Activated CD4-positive, alpha-beta memory T cell treated with anti-CD3 and anti-CD28 coated beads, Interleukin-2, amount 10 ng/mL, durations not matched to agents 7 days and 5 days (primary cell): ENCODE measurements at regions of chr2 and their contacts with region 1.

Region 1: DNA sequence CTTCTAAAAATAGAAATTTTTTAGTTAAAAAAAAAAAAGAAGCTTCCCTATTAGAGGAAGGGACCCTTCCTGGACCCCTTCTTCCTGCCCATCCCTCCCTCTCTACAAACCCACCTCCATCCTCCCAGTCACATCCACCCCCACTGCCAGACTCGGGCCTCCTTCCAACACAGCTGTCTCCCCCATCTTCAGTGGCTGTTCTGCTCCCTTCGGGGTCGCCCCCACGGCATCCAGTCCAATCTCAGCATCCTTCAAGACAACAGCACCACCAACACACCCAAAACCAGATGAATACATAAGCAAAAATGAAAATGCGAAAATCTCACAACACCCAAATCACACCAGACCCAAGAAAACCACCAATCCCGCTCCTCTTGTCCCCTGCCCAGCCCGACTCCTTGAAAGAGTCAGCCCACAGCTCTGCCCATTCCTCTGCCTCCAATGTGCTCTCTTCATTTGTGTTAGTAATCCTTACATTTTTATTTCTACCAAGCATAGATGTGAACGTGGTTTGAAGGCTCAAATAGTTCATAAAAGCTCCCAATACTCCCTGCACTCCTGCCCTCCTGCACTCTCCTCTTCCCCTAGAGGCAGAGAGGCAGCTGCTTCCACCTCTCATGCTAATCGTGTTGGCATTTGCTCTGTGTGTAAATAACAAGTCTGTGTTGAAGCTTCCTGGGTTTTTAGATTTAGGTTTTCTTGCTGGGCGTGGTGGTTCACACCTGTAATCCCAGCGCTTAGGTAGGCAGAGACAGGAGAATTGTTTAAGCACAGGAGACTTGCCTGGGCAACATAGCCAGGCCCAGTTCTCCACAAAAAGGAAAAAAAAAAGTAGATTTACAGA is 37.0 kb downstream of the MAL start:
- DNase-seq: no peak
- H3K4me3 Mint-ChIP-seq: no peak overlapping the region
- H3K27ac Mint-ChIP-seq: peak overlapping the region; percentile 78
- H3K4me1 Mint-ChIP-seq: peaks cover 35% of the 10 kb centered on the region
- H3K27me3 Mint-ChIP-seq: no peaks in the 10 kb centered on the region

Region 2: DNA sequence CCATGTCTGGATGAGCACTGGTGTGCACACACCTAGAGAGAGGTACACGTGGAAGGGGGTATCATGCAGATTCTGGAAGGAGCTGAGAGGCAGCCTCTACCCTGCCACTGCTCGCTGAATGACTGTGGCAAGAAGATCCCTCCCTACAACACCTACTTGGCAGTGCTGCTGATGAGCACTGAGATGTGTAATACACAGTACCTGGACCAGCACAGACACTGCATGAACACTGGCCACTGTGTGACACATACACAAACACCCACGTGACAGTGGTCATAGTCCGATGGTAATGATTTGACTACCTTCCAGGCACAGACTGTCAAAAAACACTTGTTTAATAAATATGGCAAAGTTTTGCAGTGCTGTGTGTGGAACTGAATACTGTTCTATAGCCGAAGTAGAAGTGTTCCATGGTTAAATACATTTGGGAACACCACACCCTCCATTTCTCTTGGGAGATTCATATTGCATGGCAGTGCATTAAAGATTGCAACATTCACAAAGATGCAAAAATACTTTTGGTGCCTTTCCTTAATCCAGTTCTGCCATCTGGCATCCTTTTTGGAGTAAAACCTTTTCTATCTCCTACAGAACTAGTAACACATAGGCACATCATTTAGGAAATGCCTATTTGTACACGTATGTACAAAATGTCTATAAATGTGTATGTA is 29.6 kb after region 1 on chr2:
- CTCF ChIA-PET with region 1: no interaction called
- POLR2A ChIA-PET with region 1: no interaction called
- DNase-seq: no peak
- H3K4me3 Mint-ChIP-seq: no peak overlapping the region
- H3K27ac Mint-ChIP-seq: no peak overlapping the region
- H3K4me1 Mint-ChIP-seq: peaks cover 4% of the 10 kb centered on the region
- H3K27me3 Mint-ChIP-seq: no peaks in the 10 kb centered on the region

Region 3: DNA sequence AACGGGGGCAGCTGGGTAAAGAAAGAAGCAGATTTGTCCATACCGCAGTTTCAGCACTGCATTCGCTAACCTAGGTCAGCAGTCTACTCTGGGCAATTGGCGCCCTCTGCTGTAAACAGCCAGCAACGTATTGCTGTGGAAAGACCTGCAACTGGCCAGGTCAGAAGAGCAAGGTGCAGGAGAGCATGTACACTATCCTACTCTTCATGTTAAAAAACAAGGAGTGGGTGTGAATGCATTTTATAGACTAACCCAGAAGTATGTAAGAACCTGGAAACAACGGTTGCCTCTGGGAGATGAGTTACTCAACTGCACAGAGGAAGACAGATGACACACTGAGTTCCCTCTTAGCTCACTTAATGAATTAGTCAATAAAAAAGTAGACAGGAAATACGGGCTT is 53.0 kb after region 1 on chr2:
- CTCF ChIA-PET with region 1: interaction called, 11 read pairs
- POLR2A ChIA-PET with region 1: interaction called, 3 read pairs
- DNase-seq: peak; percentile 81
- H3K4me3 Mint-ChIP-seq: no peak overlapping the region
- H3K27ac Mint-ChIP-seq: peak overlapping the region; percentile 18
- H3K4me1 Mint-ChIP-seq: peaks cover 42% of the 10 kb centered on the region
- H3K27me3 Mint-ChIP-seq: no peaks in the 10 kb centered on the region